ENCODE measurements at regions of chr7 and their contacts with region 1.

Region 1: GRCh38 chr7:134316539-134317344 is at the start of gene SLC35B4:
- DNase-seq: peak; percentile 84 to 96
- ATAC-seq: peak; percentile 95 to 98 (median 97)
- H3K4me3 ChIP-seq: peak within 1 kb of the TSS; percentile 62
- H3K4me3 Mint-ChIP-seq: peak within 1 kb of the TSS; percentile 93
- H3K27ac ChIP-seq: peak within 1 kb of the TSS; percentile 6
- H3K27ac Mint-ChIP-seq: peak within 1 kb of the TSS; percentile 65 to 80
- H3K4me1 ChIP-seq: peaks cover 13% of the 10 kb centered on the region
- H3K4me1 Mint-ChIP-seq: peaks cover 13 to 17% of the 10 kb centered on the region in 2 donors
- H3K27me3 ChIP-seq: no peaks in the 10 kb centered on the region
- H3K27me3 Mint-ChIP-seq: peaks cover 7 to 15% of the 10 kb centered on the region in 2 donors
- CTCF ChIP-seq: no peak
- total RNA-seq, gene SLC35B4: 5.2 to 11.5 (median 11.2) TPM

Region 2: GRCh38 chr7:134126966-134127848 is 189.5 kb before region 1 on chr7 and contains the start of gene LRGUK:
- intact Hi-C with region 1: loop called (anchors 2 kb)
- DNase-seq: peak; percentile 64 to 88
- ATAC-seq: peak; percentile 96 to 100 (median 100)
- H3K4me3 ChIP-seq: peak within 1 kb of the TSS; percentile 45
- H3K4me3 Mint-ChIP-seq: peak within 1 kb of the TSS; percentile 76
- H3K27ac ChIP-seq: no peak within 1 kb of the TSS
- H3K27ac Mint-ChIP-seq: peak within 1 kb of the TSS in 1 of 2 donors; percentile 25
- H3K4me1 ChIP-seq: peaks cover 10% of the 10 kb centered on the region
- H3K4me1 Mint-ChIP-seq: peaks cover 13 to 14% of the 10 kb centered on the region in 2 donors
- H3K27me3 ChIP-seq: no peaks in the 10 kb centered on the region
- H3K27me3 Mint-ChIP-seq: peaks cover 27 to 38% of the 10 kb centered on the region in 2 donors
- CTCF ChIP-seq: no peak
- total RNA-seq, gene LRGUK: 0.90 to 1.7 (median 0.92) TPM

Region 3: GRCh38 chr7:134209322-134210015 is 107.3 kb before region 1 on chr7:
- intact Hi-C with region 1: no loop called
- DNase-seq: no peak
- ATAC-seq: no peak
- H3K4me3 ChIP-seq: no peak overlapping the region
- H3K4me3 Mint-ChIP-seq: no peak overlapping the region
- H3K27ac ChIP-seq: no peak overlapping the region
- H3K27ac Mint-ChIP-seq: no peak overlapping the region
- H3K4me1 ChIP-seq: no peaks in the 10 kb centered on the region
- H3K4me1 Mint-ChIP-seq: no peaks in the 10 kb centered on the region
- H3K27me3 ChIP-seq: no peaks in the 10 kb centered on the region
- H3K27me3 Mint-ChIP-seq: peaks cover 7 to 16% of the 10 kb centered on the region in 2 donors
- CTCF ChIP-seq: no peak

Measured in natural killer cell (primary cell).